ENCODE measurements at regions of chr5 and their contacts with region 1.

Region 1: DNA sequence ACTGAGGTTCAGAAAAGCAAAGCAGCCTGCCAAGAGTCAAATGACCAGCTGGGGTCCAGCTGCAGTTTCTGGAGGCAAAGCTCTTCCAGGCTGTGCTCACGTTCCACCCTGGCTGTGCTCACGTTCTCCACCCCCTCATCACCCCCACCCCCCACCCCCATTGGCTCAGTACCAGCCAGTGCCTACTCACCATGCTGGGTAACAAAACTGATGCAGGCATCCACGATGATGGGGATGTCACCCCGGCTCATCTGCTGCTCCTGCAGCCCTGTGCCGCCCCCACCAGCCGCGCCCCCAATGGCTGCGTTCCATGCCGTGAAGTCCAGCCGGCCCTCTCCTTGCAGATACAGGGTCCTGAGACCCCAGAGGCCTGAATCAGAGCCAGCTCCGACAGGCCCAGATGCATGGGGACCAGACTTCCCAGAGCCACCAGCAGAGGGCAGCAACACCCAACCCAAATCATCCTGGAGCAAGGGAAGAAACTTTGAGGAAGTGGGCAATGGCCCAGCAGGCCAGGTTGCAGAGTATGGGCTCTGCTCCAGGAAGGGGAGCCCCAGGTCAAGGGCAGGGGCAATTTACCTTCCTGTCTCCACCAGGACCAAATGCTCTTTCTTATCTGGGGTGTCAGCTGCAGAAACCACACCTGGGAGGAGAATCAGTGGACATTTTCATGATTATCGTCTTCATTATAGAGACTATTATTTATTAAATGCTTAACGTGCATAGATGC is 13.7 kb upstream of the FCHSD1 start:
- DNase-seq: peak; percentile 85
- H3K4me3 Mint-ChIP-seq: no peak overlapping the region
- H3K27ac Mint-ChIP-seq: no peak overlapping the region
- H3K4me1 Mint-ChIP-seq: peaks cover 4% of the 10 kb centered on the region
- H3K27me3 Mint-ChIP-seq: no peaks in the 10 kb centered on the region

Region 2: GRCh38 chr5:141402553-141403260 is 262.2 kb before region 1 on chr5 and contains the start of gene PCDHGA9:
- CTCF ChIA-PET with region 1: no interaction called
- POLR2A ChIA-PET with region 1: no interaction called
- intact Hi-C with region 1: no loop called
- DNase-seq: peak; percentile 31
- H3K4me3 Mint-ChIP-seq: peak within 1 kb of the TSS; percentile 23
- H3K27ac Mint-ChIP-seq: no peak within 1 kb of the TSS
- H3K4me1 Mint-ChIP-seq: no peaks in the 10 kb centered on the region
- H3K27me3 Mint-ChIP-seq: peaks cover 58% of the 10 kb centered on the region
- total RNA-seq, gene PCDHGA9: 0.10 TPM in 1 of 2 experiments, not detected in the other

Region 3: DNA sequence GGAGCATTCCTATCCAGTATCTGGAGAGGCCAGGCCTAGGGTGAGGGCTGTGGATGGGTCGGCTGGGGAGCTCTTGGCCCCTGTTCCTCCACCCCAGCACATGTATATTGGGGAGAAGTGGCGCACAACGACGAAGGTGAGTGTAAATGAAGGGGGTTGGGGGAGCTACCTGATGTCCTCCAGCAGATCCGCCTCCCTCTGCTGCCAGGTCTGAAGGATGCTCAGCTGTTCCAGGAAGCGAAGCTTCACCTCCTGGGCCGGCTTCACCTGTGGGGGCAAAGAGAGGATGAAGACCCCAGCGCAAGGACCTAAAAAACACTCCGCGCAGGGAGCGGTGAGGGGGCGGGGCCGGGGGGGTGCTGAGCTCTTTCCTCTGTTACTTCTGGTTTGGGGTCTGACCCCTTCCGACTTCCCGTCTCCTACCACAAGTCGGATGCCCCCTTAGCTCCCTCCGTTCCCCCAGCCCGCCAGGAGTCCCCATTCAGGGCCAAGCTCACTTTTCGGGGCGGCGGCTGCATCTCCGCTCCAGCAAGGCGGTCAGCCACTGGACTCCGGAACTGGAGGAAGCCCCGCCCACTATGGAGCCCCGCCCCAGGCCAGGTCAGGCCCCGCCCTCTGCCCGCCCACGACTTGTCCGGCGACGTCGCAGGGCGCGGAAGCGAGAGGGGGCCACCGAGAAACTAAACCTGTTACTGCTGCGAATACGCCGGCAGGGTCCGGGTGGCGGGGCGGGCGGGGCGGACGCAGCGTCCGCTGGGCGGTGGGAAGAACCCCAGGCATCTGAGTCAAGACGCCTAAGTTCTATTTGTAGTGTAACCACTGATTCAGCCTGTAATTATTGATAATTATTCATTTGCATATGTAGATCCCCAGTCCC is 13.8 kb before region 1 on chr5 and contains the start of gene FCHSD1:
- CTCF ChIA-PET with region 1: interaction called, 14 read pairs
- POLR2A ChIA-PET with region 1: no interaction called
- intact Hi-C with region 1: no loop called
- DNase-seq: peak; percentile 92
- H3K4me3 Mint-ChIP-seq: peak within 1 kb of the TSS; percentile 96
- H3K27ac Mint-ChIP-seq: peak within 1 kb of the TSS; percentile 89
- H3K4me1 Mint-ChIP-seq: peaks cover 22% of the 10 kb centered on the region
- H3K27me3 Mint-ChIP-seq: no peaks in the 10 kb centered on the region
- total RNA-seq, gene FCHSD1: 40.1 to 46.0 TPM

Region 4: DNA sequence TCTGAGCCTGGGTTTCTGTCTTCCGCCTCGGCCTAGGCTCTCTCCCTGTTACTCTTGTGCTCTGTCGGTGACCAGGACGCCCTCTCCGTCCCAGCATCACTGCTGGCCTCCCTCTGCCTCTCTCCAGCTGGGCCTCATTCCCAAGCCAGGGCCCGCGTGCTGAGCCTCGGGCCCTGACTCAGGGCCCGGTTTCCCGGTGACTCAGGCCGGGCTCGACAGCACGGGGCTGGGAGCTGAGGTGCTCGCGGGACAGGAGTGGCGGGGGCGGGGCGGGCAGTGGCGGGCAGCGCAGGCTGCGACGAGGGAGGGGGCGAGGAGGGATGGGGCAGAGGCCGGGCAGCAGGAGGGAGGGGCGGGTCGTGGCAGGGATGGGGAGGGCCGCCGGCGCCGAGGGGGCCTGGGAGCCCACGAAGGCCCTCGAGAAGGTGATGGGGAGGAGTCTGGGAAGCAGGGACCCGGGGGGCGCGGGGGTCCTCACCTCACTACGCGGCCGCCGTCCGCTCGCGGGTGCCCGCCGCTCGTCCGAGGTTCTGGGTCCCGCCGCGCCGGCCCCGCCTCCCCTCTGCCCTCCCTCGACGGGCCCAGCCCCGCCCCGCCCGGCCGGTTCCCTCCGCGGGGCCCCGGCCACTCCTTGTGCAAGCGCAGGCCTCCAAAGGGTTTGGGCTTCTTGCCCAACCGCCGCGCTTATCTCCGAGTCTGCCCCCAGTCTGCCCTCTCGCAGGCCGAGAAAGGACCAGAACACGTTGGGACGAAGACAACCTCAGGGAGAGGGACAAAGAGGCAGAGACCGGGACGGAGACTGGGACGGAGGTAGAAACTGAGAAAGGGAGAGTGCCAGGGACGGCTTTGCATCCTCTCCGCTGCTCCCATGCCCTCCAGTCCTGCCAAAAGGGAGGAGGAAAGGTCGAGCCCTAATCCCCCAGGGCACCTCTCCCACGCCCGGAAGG is 17.1 kb after region 1 on chr5 and contains the start of gene ARAP3:
- CTCF ChIA-PET with region 1: interaction called, 15 read pairs
- POLR2A ChIA-PET with region 1: no interaction called
- intact Hi-C with region 1: no loop called
- DNase-seq: peak; percentile 53
- H3K4me3 Mint-ChIP-seq: peak within 1 kb of the TSS; percentile 69
- H3K27ac Mint-ChIP-seq: peak within 1 kb of the TSS; percentile 68
- H3K4me1 Mint-ChIP-seq: peaks cover 19% of the 10 kb centered on the region
- H3K27me3 Mint-ChIP-seq: no peaks in the 10 kb centered on the region
- total RNA-seq, gene ARAP3: 5.1 to 5.2 TPM

Region 5: DNA sequence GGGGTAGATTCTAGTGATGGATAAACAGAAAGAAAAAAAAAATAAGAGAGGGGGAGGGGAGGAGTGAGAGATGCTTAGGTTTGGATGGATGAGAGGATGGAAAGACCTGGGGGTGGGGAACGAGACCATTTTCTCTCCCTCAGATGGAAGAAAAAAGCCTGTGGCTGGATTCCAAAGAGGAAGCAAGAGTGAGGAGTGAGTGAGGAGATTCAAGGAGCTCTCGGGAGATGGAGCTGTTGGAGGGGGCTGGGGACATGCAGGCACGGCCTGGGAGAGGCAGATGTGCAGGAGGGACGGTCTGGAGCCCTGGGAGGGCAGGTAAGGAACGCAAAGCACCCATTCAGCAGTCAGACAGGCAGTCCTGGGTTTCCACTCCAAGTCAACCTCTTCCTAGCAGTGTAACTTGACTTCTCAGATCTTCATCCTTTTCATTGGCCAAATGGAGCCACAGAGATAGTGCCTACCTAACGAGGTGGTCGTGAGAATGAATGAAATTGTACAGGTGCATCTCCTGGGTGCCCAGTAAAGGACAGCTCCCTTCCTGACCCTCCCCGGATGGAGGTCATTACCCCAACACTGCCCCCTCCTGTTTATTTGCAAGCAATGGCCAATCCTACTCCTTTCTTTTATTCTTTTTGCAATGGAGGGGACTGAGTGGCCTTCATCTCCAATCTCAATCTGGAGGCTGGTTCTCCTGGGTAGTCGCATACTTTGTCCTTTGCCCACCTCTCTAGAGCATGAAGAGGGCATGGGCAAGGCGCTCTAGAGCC is 161.1 kb after region 1 on chr5:
- CTCF ChIA-PET with region 1: interaction called, 7 read pairs
- POLR2A ChIA-PET with region 1: no interaction called
- intact Hi-C with region 1: loop called (anchors 5 kb)
- DNase-seq: peak; percentile 30
- H3K4me3 Mint-ChIP-seq: no peak overlapping the region
- H3K27ac Mint-ChIP-seq: no peak overlapping the region
- H3K4me1 Mint-ChIP-seq: no peaks in the 10 kb centered on the region
- H3K27me3 Mint-ChIP-seq: peaks cover 2% of the 10 kb centered on the region